Motor neuron (in vitro differentiated cells): ENCODE measurements at regions of chr14 and their contacts with region 1.

Region 1: GRCh38 chr14:68843471-68844209 is 50.8 kb upstream of the ZFP36L1 start:
- ATAC-seq: peak; percentile 86 to 99 (median 91)
- H3K4me3 ChIP-seq: peak overlapping the region; percentile 14 to 26 (median 17)
- H3K27ac ChIP-seq: no peak overlapping the region
- H3K4me1 ChIP-seq: peaks cover 0 to 2% of the 10 kb centered on the region in 2 donors

Region 2: GRCh38 chr14:67837011-67837624 is 1006.5 kb before region 1 on chr14:
- in situ Hi-C with region 1: loop called in 2 of 9 experiments (anchors 25 kb)
- ATAC-seq: peak in 3 of 8 experiments; percentile 58 to 62 (median 62)
- H3K4me3 ChIP-seq: no peak overlapping the region
- H3K27ac ChIP-seq: no peak overlapping the region
- H3K4me1 ChIP-seq: no peaks in the 10 kb centered on the region

Region 3: DNA sequence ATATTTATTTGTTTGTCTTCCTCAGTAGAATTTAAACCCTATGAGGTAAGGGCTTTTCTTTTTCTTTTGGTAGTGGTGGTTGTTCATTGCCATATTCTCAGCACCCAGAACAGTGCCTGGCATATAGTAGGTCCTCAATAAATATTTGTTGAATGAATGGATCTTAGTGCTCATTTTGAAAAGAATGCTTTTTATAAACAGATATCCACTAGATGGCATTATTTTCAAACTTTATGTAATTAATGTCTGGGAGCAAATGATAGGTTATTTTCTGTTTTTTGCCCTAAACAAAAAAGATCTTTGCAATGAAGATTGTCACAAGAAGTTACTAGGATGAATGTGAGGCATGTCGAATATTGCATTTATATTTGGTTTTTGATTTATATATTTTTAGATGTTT is 959.9 kb before region 1 on chr14:
- in situ Hi-C with region 1: loop called in 2 of 9 experiments (anchors 25 kb)
- ATAC-seq: no peak
- H3K4me3 ChIP-seq: no peak overlapping the region
- H3K27ac ChIP-seq: no peak overlapping the region
- H3K4me1 ChIP-seq: no peaks in the 10 kb centered on the region

Region 4: GRCh38 chr14:67943947-67944346 is 899.7 kb before region 1 on chr14:
- in situ Hi-C with region 1: loop called in 2 of 9 experiments (anchors 25 kb)
- ATAC-seq: peak; percentile 38 to 77 (median 58)
- H3K4me3 ChIP-seq: no peak overlapping the region
- H3K27ac ChIP-seq: no peak overlapping the region
- H3K4me1 ChIP-seq: peaks cover 17 to 25% of the 10 kb centered on the region in 2 donors

Region 5: DNA sequence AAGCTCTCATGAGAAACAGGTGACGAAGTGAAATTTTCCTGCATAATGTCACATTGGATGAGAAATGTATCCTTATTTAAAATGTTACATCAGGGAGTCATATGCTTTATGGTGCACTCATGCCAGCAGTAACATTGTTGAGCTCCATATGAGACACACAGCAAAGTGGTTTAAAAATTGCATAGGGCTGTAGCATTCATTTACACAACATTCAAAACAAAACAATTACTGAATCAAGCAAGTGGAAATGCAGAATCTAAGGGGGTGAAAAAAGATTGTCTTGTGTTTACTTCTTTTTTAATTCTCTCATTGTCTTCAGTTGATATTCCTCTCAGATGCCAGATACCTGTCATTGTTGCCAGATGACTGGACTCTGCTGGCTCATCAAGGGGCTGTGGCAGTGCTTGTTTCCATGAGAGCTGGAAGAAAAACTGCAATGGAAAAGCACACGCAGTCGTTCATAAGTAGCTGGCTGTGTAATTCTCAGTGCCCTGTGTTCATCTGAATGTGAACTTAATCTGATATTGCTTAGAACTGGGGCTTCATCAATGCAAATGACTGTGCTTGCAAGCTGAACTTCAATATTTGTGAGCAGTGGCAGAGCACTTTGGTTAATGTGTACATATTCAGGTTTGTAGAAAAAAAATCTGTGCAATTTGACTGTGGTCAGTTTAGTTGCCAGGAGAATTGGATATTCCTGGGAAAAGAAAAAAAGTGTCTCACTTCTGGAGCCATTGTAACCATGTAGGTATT is 718.5 kb before region 1 on chr14:
- in situ Hi-C with region 1: loop called in 1 of 9 experiments (anchors 25 kb)
- ATAC-seq: peak; percentile 71 to 97 (median 88)
- H3K4me3 ChIP-seq: no peak overlapping the region
- H3K27ac ChIP-seq: no peak overlapping the region
- H3K4me1 ChIP-seq: peaks cover 0 to 7% of the 10 kb centered on the region in 2 donors